ENCODE measurements at regions of chrX and their contacts with region 1.

Region 1: GRCh38 chrX:129318375-129318774 is 204.9 kb downstream of the SMARCA1 start:
- DNase-seq: peak in 1 of 10 donors; percentile 6

Region 2: GRCh38 chrX:129462707-129463106 is 144.3 kb after region 1 on chrX:
- intact Hi-C with region 1: loop called (anchors 5 kb)
- DNase-seq: no peak

Region 3: GRCh38 chrX:129549124-129549523 is 230.7 kb after region 1 on chrX:
- intact Hi-C with region 1: no loop called
- DNase-seq: no peak

Measured in posterior cingulate gyrus (tissue), 11 donors.